Heart left ventricle (tissue), 16 donors: ENCODE measurements at regions of chr11 and their contacts with region 1.

Region 1: DNA sequence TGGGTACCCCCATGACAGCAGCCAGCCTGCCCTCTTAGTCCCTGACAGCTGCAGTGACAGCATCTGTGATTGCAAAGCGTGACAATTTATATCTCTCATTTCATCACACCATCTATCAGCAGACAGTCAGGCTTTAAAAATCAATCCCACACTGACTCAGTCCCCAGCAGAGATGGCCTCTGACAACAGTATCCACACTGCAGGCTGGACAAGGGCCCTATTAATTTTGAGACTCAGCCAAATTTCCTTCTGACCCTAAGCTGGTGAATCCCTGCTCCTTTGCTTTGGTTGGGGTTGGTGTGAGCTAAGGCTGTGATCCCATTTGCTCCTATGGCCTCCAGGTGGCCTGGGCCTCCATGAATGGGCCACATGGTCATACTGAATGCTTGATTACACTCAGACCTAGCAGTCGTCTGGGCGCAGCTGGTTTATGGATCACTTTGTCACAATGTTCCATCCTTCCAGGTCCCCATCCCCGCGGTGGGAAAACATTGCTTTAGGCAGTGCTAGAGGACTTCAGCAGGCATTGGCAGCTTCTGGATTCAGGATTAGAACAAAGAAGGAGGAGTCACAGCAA is 68.2 kb upstream of the B3GAT1 start:
- DNase-seq: no peak
- ATAC-seq: no peak
- H3K4me3 ChIP-seq: no peak overlapping the region
- H3K27ac ChIP-seq: no peak overlapping the region
- H3K4me1 ChIP-seq: no peaks in the 10 kb centered on the region
- H3K27me3 ChIP-seq: peaks cover 0 to 87% (median 5%) of the 10 kb centered on the region in 9 donors
- CTCF ChIP-seq: no peak
- POLR2A ChIP-seq: no peak

Region 2: DNA sequence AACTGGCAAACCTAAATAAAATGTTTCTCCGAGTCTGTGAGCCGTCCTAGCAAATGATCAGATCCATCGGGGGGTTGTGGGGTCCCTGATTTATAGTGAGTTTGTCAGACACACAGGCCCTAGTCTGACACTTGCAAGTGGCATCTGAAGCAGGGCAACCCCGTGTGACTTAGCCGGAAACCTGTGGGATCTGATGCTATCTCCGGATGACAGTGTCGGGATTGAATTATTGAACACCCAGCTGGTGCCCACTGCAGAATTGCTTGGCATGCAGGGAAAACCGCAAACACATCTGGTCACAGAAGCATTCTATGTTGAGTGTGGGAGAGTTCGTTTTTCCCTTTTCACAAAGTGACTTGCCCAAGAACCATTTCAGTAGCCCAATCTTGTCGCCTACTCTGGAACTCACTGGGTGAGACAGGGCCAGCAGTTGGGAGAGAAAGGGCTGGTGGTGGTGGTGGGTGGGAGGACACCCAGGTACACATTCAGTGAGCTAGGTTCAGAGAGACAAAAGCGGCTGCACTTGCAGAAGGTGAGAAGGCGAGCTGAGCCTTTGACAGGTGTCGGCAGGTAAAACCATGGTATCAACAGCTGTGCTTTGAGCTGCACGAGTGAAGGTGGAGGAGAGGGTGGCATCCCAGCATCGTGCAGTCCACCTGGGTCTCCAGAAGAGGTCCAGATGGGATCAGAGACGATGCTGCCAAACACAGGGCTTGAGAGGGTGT is 34.5 kb before region 1 on chr11:
- intact Hi-C with region 1: no loop called
- DNase-seq: no peak
- ATAC-seq: no peak
- H3K4me3 ChIP-seq: no peak overlapping the region
- H3K27ac ChIP-seq: no peak overlapping the region
- H3K4me1 ChIP-seq: no peaks in the 10 kb centered on the region
- H3K27me3 ChIP-seq: peaks cover 0 to 26% (median 0%) of the 10 kb centered on the region in 9 donors
- CTCF ChIP-seq: no peak
- POLR2A ChIP-seq: no peak

Region 3: GRCh38 chr11:134504146-134504905 is 24.1 kb after region 1 on chr11:
- intact Hi-C with region 1: no loop called
- DNase-seq: no peak
- ATAC-seq: no peak
- H3K4me3 ChIP-seq: no peak overlapping the region
- H3K27ac ChIP-seq: no peak overlapping the region
- H3K4me1 ChIP-seq: no peaks in the 10 kb centered on the region
- H3K27me3 ChIP-seq: peaks cover 0 to 44% (median 3%) of the 10 kb centered on the region in 9 donors
- CTCF ChIP-seq: no peak
- POLR2A ChIP-seq: no peak

Region 4: DNA sequence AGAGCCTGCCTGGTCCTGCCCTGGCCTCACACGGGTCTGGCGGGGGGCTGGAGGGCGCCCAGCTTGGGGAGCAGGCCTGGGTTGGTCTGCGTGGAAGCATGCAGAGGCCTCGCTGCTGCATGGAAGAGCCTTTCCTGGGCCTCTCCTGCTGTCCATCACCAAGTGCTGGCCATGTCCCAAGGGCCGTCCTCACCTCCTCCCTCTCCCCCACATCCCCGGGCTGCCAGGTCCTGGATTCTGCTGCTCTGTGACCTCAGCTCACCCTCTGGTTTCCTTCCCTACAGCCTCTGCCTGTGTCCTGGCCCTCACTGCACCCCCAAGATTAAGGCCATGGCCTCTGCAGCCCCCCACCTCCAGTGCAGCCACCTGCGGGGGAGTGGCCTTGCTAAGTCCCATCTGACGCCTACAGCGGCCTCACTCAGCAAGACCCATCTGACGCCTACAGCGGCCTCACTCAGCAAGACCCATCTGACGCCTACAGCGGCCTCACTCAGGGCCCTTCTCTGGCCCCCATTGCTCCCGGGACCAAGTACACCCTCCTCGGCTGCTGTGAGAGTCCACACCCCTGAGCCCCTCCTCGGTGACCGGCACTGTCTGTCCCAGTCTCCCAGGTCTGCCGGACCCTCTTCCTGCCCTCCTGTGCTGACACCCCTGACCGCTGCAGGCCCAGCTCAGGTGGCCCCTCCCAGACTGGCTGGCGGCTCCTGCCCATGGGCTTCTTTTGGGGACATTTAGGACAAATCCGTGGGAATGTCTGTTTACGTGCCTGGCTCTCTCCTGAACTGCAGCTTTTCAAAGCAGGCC is 51.3 kb after region 1 on chr11:
- intact Hi-C with region 1: loop called in 1 of 10 experiments (anchors 5 kb)
- DNase-seq: peak in 4 of 5 donors; percentile 18 to 50 (median 36)
- ATAC-seq: peak in 3 of 4 donors; percentile 45 to 76 (median 61)
- H3K4me3 ChIP-seq: no peak overlapping the region
- H3K27ac ChIP-seq: no peak overlapping the region
- H3K4me1 ChIP-seq: no peaks in the 10 kb centered on the region
- H3K27me3 ChIP-seq: peaks cover 0 to 71% (median 6%) of the 10 kb centered on the region in 9 donors
- CTCF ChIP-seq: no peak
- POLR2A ChIP-seq: no peak